ENCODE measurements at regions of chr1 and their contacts with region 1.

Region 1: DNA sequence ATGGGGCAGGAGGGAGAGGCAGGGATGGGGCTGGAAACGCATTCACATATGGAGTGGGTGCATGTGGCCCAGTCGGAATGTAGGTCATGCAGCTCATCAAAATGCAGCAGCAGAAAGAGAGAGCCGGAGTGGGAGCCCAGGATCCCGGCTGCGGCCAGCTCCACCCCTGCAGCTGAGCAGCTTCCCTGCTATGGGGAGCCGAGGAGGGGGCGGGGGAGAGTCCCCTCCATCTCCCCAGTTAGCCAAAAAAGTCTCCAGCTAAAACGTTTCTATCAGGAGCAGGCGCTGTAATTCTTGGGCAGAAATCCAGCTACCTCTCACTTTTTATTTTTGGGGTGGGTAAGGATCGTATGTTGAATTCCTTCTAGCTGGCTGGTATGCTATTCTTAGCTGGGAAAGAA is 39.7 kb downstream of the MRPL37 start:
- DNase-seq: no peak
- H3K4me3 ChIP-seq: no peak overlapping the region
- H3K27ac ChIP-seq: no peak overlapping the region
- H3K4me1 ChIP-seq: no peaks in the 10 kb centered on the region
- H3K27me3 ChIP-seq: no peaks in the 10 kb centered on the region
- CTCF ChIP-seq: no peak
- EP300 ChIP-seq: no peak
- POLR2A ChIP-seq: no peak

Region 2: DNA sequence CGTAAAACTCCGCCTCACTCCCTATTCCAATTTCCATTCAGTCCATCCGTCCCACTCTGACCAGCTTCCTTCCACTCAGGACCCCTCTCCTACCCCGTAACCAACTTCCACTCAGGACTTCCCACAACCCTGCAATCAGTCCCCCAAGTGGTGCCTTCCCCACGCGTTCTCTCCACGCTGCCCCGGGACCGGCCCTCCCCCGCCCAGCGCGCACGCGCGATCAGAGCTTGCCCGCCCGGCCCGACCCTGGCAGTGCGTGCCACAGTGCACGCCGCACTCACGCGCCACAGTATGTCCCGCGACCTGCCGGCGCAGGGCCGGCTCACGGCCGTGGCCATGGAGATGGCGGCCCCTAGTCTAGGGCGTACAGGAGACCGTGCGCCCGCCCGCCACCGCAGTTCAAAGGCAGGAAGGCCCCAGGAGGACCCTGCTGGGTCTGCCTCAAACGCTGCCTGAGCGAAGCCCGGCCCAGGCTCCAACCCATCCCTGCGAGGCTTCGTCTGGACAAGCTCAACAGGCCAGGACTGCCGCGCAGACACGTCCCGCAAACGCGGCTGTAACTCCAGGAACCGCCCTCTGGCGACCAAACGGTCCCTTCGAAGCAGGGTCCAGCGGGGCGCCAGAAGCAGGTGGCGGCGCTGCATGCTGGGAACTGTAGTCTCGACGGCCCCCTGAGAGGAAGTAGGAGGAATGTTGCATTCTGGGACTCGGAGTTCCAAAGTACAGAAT is 401.5 kb before region 1 on chr1 and contains the start of gene NDC1:
- in situ Hi-C with region 1: no loop called
- intact Hi-C with region 1: loop called (anchors 5 kb)
- DNase-seq: peak; percentile 92
- H3K4me3 ChIP-seq: peak within 1 kb of the TSS; percentile 59 to 89 (median 73)
- H3K27ac ChIP-seq: peak within 1 kb of the TSS; percentile 93 to 97 (median 95)
- H3K4me1 ChIP-seq: peaks cover 6 to 9% (median 7%) of the 10 kb centered on the region in 4 donors
- H3K27me3 ChIP-seq: no peaks in the 10 kb centered on the region
- CTCF ChIP-seq: peak in 1 of 5 experiments; percentile 17
- EP300 ChIP-seq: no peak
- POLR2A ChIP-seq: peak; percentile 38
- total RNA-seq, gene NDC1: 1.1 to 11.1 (median 8.0) TPM

Measured in transverse colon (tissue), 4 donors.